Natural killer cell (primary cell): ENCODE measurements at regions of chr7 and their contacts with region 1.

Region 1: GRCh38 chr7:50092579-50093491 is at the start of gene ZPBP:
- DNase-seq: peak; percentile 43 to 84
- ATAC-seq: peak; percentile 75 to 88 (median 82)
- H3K4me3 ChIP-seq: peak within 1 kb of the TSS; percentile 46
- H3K4me3 Mint-ChIP-seq: peak within 1 kb of the TSS; percentile 94
- H3K27ac ChIP-seq: peak within 1 kb of the TSS; percentile 39
- H3K27ac Mint-ChIP-seq: peak within 1 kb of the TSS; percentile 70 to 94
- H3K4me1 ChIP-seq: peaks cover 4% of the 10 kb centered on the region
- H3K4me1 Mint-ChIP-seq: peaks cover 6 to 7% of the 10 kb centered on the region in 2 donors
- H3K27me3 ChIP-seq: no peaks in the 10 kb centered on the region
- H3K27me3 Mint-ChIP-seq: peaks cover 10 to 18% of the 10 kb centered on the region in 2 donors
- CTCF ChIP-seq: peak; percentile 96
- total RNA-seq, gene ZPBP: not detected

Region 2: DNA sequence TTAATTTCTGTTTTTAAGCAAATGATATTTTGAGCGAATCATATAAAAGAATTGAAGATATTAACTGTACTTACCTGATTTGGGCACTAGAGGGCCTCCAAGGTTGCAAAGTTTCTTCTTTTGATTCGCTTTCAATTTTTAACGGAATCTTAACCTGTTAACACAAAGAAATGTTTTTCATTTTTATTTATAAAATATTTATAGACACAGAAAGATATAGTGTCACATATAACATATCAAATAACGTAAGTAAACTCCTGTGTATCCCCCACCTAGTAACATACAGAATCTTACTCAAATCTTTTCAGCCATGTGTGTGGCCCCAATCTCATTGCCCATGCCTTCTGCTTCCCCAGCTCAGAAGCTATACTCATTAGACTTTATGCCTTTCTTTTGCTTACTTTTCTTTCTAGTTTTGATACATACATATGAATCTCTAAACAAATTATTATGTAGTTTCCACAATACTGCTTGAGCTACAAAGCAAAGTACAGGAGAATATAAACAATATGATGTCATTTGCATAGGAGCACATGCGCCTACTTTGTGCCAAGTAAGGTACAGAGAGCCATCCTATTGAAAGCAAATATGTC is 49.7 kb after region 1 on chr7:
- intact Hi-C with region 1: loop called (anchors 1 kb)
- DNase-seq: peak in 1 of 2 donors; percentile 84
- ATAC-seq: peak; percentile 67 to 73 (median 70)
- H3K4me3 ChIP-seq: no peak overlapping the region
- H3K4me3 Mint-ChIP-seq: no peak overlapping the region
- H3K27ac ChIP-seq: no peak overlapping the region
- H3K27ac Mint-ChIP-seq: no peak overlapping the region
- H3K4me1 ChIP-seq: peaks cover 3% of the 10 kb centered on the region
- H3K4me1 Mint-ChIP-seq: peaks cover 4% of the 10 kb centered on the region in 2 donors
- H3K27me3 ChIP-seq: no peaks in the 10 kb centered on the region
- H3K27me3 Mint-ChIP-seq: peaks cover 8 to 14% of the 10 kb centered on the region in 2 donors
- CTCF ChIP-seq: peak; percentile 87

Region 3: GRCh38 chr7:50418086-50418515 is 325.3 kb after region 1 on chr7:
- intact Hi-C with region 1: loop called (anchors 1 kb)
- DNase-seq: peak; percentile 46 to 86
- ATAC-seq: peak; percentile 80 to 99 (median 96)
- H3K4me3 ChIP-seq: no peak overlapping the region
- H3K4me3 Mint-ChIP-seq: no peak overlapping the region
- H3K27ac ChIP-seq: no peak overlapping the region
- H3K27ac Mint-ChIP-seq: no peak overlapping the region
- H3K4me1 ChIP-seq: peaks cover 24% of the 10 kb centered on the region
- H3K4me1 Mint-ChIP-seq: peaks cover 6 to 7% of the 10 kb centered on the region in 2 donors
- H3K27me3 ChIP-seq: no peaks in the 10 kb centered on the region
- H3K27me3 Mint-ChIP-seq: no peaks in the 10 kb centered on the region
- CTCF ChIP-seq: peak; percentile 78

Region 4: DNA sequence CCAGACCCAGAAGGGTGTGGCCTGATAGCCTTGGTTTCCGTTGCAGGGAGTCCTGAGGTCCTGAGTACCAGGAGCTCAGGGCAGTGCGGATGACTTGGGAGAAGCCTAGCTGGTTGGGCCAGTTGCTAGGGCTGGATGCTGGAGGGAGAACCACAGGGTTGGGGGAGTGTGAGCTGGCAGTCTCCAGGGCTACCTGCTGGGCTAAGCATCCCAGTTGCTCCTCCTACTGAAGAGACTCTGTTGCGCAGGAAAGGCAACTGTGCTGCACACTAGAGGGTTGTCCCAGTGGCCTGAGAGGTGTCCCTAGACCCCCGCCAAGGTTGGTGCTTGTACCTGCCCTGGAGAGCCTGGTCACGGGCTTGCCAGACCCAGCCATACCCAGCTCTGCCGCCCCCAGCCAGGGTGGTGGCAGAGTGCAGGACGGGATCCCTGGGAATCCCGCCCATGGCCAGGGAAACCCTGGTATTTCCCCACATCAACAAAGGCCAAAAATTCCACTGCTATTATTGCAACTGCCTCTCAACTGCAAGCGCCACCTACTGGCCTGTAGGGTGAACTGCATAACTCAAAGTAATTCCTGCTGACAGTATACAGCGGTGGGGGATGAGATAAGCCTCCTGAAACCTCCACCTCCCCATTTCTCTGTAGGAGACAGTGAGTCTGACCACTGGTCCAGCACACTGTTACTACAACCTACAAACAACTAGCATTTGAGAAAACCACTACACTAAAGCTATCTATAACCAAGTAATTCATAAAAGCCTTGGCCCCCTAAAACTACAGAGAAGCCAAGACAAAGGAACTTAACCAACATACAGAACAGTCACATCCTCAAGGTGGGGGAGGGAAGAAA is 540.0 kb after region 1 on chr7:
- intact Hi-C with region 1: loop called (anchors 1 kb)
- DNase-seq: peak; percentile 56 to 80
- ATAC-seq: peak; percentile 87 to 95 (median 92)
- H3K4me3 ChIP-seq: no peak overlapping the region
- H3K4me3 Mint-ChIP-seq: no peak overlapping the region
- H3K27ac ChIP-seq: no peak overlapping the region
- H3K27ac Mint-ChIP-seq: no peak overlapping the region
- H3K4me1 ChIP-seq: no peaks in the 10 kb centered on the region
- H3K4me1 Mint-ChIP-seq: no peaks in the 10 kb centered on the region
- H3K27me3 ChIP-seq: peaks cover 2% of the 10 kb centered on the region
- H3K27me3 Mint-ChIP-seq: peaks cover 24 to 31% of the 10 kb centered on the region in 2 donors
- CTCF ChIP-seq: peak; percentile 96

Region 5: DNA sequence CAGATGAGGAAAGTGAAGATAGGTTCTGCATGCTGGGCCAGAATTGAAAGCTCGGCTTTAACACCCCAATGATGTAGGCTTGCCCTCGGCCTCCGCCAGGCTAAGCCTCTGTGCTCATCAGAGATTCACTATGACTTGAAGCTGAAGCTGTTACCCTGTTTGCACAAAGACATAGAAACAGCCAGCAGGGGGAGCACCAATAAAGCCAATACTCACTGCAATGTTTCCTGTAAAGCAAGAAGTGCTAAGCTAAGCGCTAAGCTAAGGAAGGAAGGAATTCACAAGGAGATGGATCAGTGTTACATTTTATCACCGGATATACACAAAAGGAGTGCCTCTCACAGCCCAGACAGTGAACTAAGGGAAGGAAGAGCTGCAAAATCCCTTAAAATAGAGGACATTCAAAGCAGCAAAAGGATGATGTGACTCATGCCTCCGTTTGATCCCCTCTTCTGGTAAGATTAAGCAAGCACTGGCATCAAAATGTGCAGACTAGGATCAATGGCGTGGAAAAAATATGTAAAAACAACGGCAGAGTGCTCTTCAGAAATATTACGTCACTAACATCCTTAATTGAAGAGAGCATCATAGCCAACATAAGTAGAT is 1070.0 kb after region 1 on chr7:
- intact Hi-C with region 1: loop called (anchors 2 kb)
- DNase-seq: peak; percentile 28 to 74
- ATAC-seq: peak in 2 of 3 donors; percentile 44 to 78
- H3K4me3 ChIP-seq: no peak overlapping the region
- H3K4me3 Mint-ChIP-seq: no peak overlapping the region
- H3K27ac ChIP-seq: no peak overlapping the region
- H3K27ac Mint-ChIP-seq: no peak overlapping the region
- H3K4me1 ChIP-seq: no peaks in the 10 kb centered on the region
- H3K4me1 Mint-ChIP-seq: peaks cover 0 to 9% of the 10 kb centered on the region in 2 donors
- H3K27me3 ChIP-seq: peaks cover 6% of the 10 kb centered on the region
- H3K27me3 Mint-ChIP-seq: peaks cover 26 to 35% of the 10 kb centered on the region in 2 donors
- CTCF ChIP-seq: peak; percentile 68